Heart right ventricle (tissue), 16 donors: ENCODE measurements at regions of chr10 and their contacts with region 1.

Region 1: GRCh38 chr10:118349235-118349634 is 7.1 kb upstream of the FAM204A start:
- DNase-seq: no peak
- ATAC-seq: no peak
- H3K4me3 ChIP-seq: no peak overlapping the region
- H3K27ac ChIP-seq: no peak overlapping the region
- H3K4me1 ChIP-seq: no peaks in the 10 kb centered on the region
- H3K27me3 ChIP-seq: peaks cover 0 to 38% (median 10%) of the 10 kb centered on the region in 7 donors
- CTCF ChIP-seq: no peak

Region 2: GRCh38 chr10:118035354-118036005 is 313.8 kb before region 1 on chr10:
- intact Hi-C with region 1: loop called in 1 of 10 experiments (anchors 5 kb)
- DNase-seq: no peak
- ATAC-seq: peak in 3 of 8 donors; percentile 26 to 68 (median 42)
- H3K4me3 ChIP-seq: peak overlapping the region in 1 of 10 donors; percentile 7
- H3K27ac ChIP-seq: peak overlapping the region in 1 of 10 donors; percentile 58
- H3K4me1 ChIP-seq: peaks cover 0 to 44% (median 27%) of the 10 kb centered on the region in 9 donors
- H3K27me3 ChIP-seq: no peaks in the 10 kb centered on the region
- CTCF ChIP-seq: no peak